Activated T-helper 2 cell treated with anti-CD3 and anti-CD28 coated beads, Interferon-gamma antibody, Interleukin-2, Interleukin-4, amounts not matched to agents 10 μg/mL and 5 μg/mL and 100 μg/mL, durations not matched to agents 14 hours and 24 hours and 36 hours (primary cell): ENCODE measurements at regions of chr9 and their contacts with region 1.

Region 1: DNA sequence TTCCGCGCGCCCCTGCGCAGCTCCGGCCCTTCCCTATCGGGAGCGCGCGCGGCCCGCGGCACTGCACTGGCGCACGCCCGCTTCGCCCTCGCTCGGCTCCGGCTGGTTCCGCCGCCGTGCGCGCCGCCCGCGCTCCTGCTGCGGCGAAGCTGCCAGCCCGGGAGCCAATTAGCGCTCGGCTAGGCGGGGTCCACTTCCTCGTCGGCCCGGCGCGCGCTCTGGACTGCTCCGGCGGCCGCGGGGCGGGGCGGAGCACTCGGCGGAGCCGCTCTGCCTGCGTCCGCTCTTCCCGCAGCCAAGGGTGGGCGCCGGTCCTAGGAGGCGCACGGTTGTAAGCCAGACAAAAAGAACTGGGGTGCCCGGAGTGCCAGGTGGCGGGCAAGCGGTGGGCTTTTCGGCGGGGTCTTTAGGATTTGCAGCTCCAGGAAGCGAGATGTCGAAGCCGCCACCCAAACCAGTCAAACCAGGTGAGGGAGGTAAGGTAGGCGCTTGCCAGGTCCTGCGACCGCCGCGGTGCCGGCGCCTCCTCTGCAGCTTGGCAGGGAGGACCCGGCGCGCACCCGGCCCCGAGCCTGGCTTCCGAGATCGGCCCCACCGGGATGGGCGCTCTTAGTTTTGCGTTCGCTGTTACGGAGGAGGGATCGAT is at the start of gene OSTF1:
- DNase-seq: peak; percentile 93
- H3K4me3 Mint-ChIP-seq: peak within 1 kb of the TSS; percentile 97
- H3K27ac Mint-ChIP-seq: peak within 1 kb of the TSS; percentile 94
- H3K4me1 Mint-ChIP-seq: peaks cover 62% of the 10 kb centered on the region
- H3K27me3 Mint-ChIP-seq: no peaks in the 10 kb centered on the region
- total RNA-seq, gene OSTF1: 86.8 and 87.5 TPM in 2 replicates

Region 2: DNA sequence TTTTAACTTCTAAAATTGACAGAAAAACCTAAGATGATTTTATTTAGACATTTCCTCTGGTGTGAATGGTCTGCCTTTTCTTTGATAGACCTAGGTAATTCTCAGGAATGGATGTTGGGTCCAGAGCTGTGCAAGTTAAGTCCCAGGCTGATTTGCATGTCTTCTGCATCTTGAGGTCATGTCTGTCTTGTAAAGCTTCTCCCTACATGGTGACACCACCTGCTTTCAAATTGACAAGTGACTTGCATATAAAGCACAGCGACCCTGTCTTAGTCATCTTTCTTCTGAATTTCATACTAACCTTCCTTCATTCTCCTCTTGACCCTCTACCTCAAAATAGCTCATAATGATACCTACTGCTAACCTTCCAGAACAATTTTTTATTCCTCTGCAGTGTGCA is 29.2 kb after region 1 on chr9:
- intact Hi-C with region 1: loop called (anchors 1 kb)
- DNase-seq: no peak
- H3K4me3 Mint-ChIP-seq: no peak overlapping the region
- H3K27ac Mint-ChIP-seq: peak overlapping the region; percentile 74
- H3K4me1 Mint-ChIP-seq: peaks cover 54% of the 10 kb centered on the region
- H3K27me3 Mint-ChIP-seq: no peaks in the 10 kb centered on the region

Region 3: DNA sequence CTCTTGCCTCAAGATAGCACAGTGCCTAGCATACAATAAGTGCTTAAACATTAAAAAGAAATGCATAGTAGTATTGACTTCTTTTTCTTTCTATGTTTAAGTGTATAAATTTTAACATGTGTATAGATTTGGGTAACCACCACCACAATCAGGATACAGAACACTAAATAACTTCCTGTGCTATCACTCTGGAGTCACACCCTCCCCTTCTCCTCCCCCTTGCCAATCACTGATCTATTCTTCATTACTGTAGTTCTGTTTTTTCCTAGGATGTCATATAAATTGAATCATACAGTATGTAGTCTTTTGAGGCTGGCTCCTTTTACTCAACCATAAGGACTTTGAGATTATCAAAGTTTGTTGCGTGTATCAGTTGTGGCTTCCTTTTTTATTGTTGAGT is 68.5 kb after region 1 on chr9:
- intact Hi-C with region 1: no loop called
- DNase-seq: no peak
- H3K4me3 Mint-ChIP-seq: no peak overlapping the region
- H3K27ac Mint-ChIP-seq: no peak overlapping the region
- H3K4me1 Mint-ChIP-seq: peaks cover 27% of the 10 kb centered on the region
- H3K27me3 Mint-ChIP-seq: no peaks in the 10 kb centered on the region

Region 4: DNA sequence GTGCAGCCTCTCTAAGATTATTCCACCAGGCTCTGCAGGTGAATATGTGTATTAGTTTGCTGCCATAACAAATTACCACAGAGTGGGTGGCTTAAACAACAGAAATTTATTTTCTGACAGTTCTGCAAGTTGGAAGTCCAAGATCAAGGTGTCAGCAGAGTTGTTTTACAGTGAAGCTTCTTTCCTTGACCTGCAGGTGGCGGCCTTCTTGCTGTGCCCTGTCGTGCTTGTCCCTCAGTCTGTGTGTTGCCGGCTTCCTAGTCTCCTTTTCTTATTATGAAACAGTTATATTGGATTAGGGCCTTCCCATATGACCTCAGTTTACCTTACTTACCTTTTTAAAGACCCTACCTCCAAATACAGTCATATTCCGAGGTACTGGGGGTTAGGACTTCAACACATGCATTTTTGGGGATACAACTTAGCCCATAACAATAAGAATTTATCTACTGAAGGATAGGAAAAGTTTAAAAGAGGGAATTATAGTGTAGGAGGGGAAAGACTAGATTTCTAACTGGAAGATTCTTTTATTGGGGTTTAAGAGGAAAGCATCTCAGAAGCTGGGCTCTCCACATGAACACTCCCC is 97.3 kb after region 1 on chr9:
- intact Hi-C with region 1: loop called (anchors 2 kb)
- DNase-seq: peak; percentile 14
- H3K4me3 Mint-ChIP-seq: no peak overlapping the region
- H3K27ac Mint-ChIP-seq: no peak overlapping the region
- H3K4me1 Mint-ChIP-seq: peaks cover 21% of the 10 kb centered on the region
- H3K27me3 Mint-ChIP-seq: peaks cover 2% of the 10 kb centered on the region